Vagina (tissue), 2 donors: ENCODE measurements at regions of chr3 and their contacts with region 1.

Region 1: GRCh38 chr3:108221911-108222852 is at the start of gene IFT57:
- DNase-seq: peak; percentile 98 to 99
- H3K4me3 ChIP-seq: peak within 1 kb of the TSS; percentile 71 to 94
- H3K27ac ChIP-seq: peak within 1 kb of the TSS; percentile 81
- H3K4me1 ChIP-seq: peaks cover 51% of the 10 kb centered on the region
- H3K27me3 ChIP-seq: no peaks in the 10 kb centered on the region
- CTCF ChIP-seq: no peak
- POLR2A ChIP-seq: peak in 1 of 2 donors; percentile 44
- total RNA-seq, gene IFT57: 44.9 TPM

Region 2: DNA sequence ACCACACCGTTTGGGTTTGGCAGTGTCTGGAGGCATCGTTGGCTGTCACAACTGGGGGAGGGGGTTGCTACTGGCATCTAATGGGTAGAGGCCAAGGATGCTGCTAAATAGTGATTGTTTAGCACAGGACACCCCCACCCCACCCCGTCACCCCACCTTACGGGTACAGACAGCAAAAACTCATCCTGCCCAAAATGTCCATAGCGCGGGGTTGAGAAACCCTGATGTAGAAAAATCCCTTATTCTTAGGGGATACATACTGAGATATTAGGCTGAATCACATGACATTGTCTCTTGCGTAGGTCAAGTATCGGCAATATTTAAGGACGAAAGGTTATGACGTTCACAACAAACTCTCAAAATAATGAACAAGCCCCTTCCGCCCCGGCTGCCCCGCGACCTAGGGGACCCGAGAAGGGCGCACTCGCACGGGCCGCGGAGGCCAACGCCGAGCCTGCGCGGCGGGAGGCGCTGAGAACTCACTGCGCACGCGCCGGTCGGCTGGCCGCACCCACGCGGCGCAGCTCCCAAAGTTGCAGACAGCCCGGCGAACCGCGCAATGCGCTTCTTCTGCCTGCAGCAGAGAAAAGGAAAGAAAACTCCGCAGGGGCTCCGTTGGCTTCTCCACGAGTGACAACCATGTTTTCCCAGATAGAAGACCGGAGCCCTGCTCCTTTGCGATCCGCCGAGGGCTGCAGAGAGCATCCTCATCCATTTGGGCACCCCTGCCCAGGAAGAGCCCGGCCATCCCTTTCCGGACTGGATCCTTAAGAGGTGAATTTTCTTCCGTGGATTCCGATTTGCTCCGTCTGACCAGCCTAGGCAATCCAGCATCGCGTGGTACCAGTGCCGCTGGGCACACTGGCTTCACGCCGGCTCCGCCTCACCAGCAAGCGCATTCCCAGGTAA is 981.7 kb before region 1 on chr3:
- intact Hi-C with region 1: loop called (anchors 10 kb)
- DNase-seq: no peak
- H3K4me3 ChIP-seq: peak overlapping the region; percentile 66 to 75
- H3K27ac ChIP-seq: peak overlapping the region; percentile 70
- H3K4me1 ChIP-seq: peaks cover 18% of the 10 kb centered on the region
- H3K27me3 ChIP-seq: no peaks in the 10 kb centered on the region
- CTCF ChIP-seq: no peak
- POLR2A ChIP-seq: peak in 1 of 2 donors; percentile 35

Region 3: DNA sequence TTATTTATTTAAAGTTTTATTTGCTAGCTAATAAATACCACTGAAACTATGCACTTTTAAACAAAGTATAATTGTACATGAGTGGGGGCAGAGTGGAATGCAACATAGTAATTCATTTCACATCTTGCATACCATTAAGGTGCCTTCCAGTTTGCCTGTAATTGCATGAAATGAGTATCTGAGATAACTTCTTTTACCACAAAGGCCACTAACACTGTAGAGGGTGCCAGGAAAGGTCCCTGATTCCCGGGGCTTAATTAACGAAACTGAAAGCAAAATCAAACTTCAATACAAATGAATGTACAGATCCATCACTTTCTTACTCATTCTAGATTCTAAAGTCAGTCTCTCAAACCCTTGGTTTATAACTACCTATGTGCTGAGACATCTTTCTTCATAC is 133.5 kb before region 1 on chr3:
- intact Hi-C with region 1: loop called (anchors 10 kb)
- DNase-seq: no peak
- H3K4me3 ChIP-seq: peak overlapping the region; percentile 76 to 93
- H3K27ac ChIP-seq: peak overlapping the region; percentile 95
- H3K4me1 ChIP-seq: peaks cover 61% of the 10 kb centered on the region
- H3K27me3 ChIP-seq: no peaks in the 10 kb centered on the region
- CTCF ChIP-seq: no peak
- POLR2A ChIP-seq: no peak